Endothelial cell of umbilical vein (primary cell): ENCODE measurements at regions of chr9 and their contacts with region 1.

Region 1: GRCh38 chr9:21334701-21335632 is at the start of gene KLHL9:
- DNase-seq: peak; percentile 91
- H3K4me3 ChIP-seq: peak within 1 kb of the TSS; percentile 60 to 96 (median 95)
- H3K27ac ChIP-seq: peak within 1 kb of the TSS; percentile 94
- H3K4me1 ChIP-seq: peaks cover 35% of the 10 kb centered on the region
- H3K27me3 ChIP-seq: peaks cover 8 to 12% of the 10 kb centered on the region in 2 experiments
- CTCF ChIP-seq: no peak
- POLR2A ChIP-seq: peak; percentile 74
- total RNA-seq, gene KLHL9: 23.5 and 23.6 TPM in 2 replicates

Region 2: GRCh38 chr9:21317956-21318923 is 16.7 kb before region 1 on chr9:
- CTCF ChIA-PET with region 1: interaction called, 29 read pairs
- POLR2A ChIA-PET with region 1: interaction called, 7 read pairs
- dilution Hi-C with region 1: no loop called
- intact Hi-C with region 1: loop called (anchors 2 kb)
- DNase-seq: peak; percentile 76
- H3K4me3 ChIP-seq: no peak overlapping the region
- H3K27ac ChIP-seq: peak overlapping the region; percentile 20
- H3K4me1 ChIP-seq: peaks cover 13% of the 10 kb centered on the region
- H3K27me3 ChIP-seq: peaks cover 10 to 22% of the 10 kb centered on the region in 2 experiments
- CTCF ChIP-seq: peak; percentile 37 to 61
- POLR2A ChIP-seq: no peak

Region 3: GRCh38 chr9:21802195-21803000 is 467.4 kb after region 1 on chr9 and contains the start of gene MTAP:
- CTCF ChIA-PET with region 1: no interaction called
- POLR2A ChIA-PET with region 1: no interaction called
- dilution Hi-C with region 1: no loop called
- intact Hi-C with region 1: loop called (anchors 5 kb)
- DNase-seq: peak; percentile 94
- H3K4me3 ChIP-seq: peak within 1 kb of the TSS; percentile 50 to 86 (median 75)
- H3K27ac ChIP-seq: peak within 1 kb of the TSS; percentile 75
- H3K4me1 ChIP-seq: peaks cover 22% of the 10 kb centered on the region
- H3K27me3 ChIP-seq: peaks cover 5 to 10% of the 10 kb centered on the region in 2 experiments
- CTCF ChIP-seq: no peak
- POLR2A ChIP-seq: peak; percentile 88
- total RNA-seq, gene MTAP: 51.2 and 55.1 TPM in 2 replicates